Adrenal gland (tissue), 19 donors: ENCODE measurements at regions of chr4 and their contacts with region 1.

Region 1: DNA sequence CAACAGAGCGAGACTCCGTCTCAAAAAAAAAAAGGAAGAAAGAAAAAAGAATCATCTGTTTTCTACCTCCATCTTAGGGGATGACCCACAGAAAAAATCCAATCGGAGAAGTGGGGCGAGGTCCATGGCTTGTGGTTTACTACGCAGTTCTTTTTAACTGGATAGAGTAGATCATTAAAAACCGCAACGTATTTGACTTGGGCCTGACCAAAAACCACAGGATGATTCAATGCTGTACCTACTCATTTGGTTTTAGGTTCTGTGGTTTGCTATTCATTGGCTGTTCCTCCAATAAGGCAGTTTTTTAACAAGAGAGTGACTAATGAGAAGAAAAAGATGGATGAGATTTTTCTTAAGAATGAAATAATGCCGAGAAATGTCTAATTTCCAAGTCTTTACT is 83.7 kb downstream of the FREM3 start:
- DNase-seq: no peak
- H3K4me3 ChIP-seq: no peak overlapping the region
- H3K27ac ChIP-seq: no peak overlapping the region
- H3K4me1 ChIP-seq: no peaks in the 10 kb centered on the region
- H3K27me3 ChIP-seq: no peaks in the 10 kb centered on the region
- CTCF ChIP-seq: no peak
- POLR2A ChIP-seq: no peak

Region 2: GRCh38 chr4:143513306-143514168 is 103.2 kb before region 1 on chr4 and contains the start of gene SMARCA5:
- intact Hi-C with region 1: no loop called
- DNase-seq: peak; percentile 96 to 99 (median 98)
- H3K4me3 ChIP-seq: peak within 1 kb of the TSS; percentile 81 to 94 (median 82)
- H3K27ac ChIP-seq: peak within 1 kb of the TSS; percentile 97 to 100 (median 98)
- H3K4me1 ChIP-seq: peaks cover 20 to 35% of the 10 kb centered on the region in 2 donors
- H3K27me3 ChIP-seq: no peaks in the 10 kb centered on the region
- CTCF ChIP-seq: no peak
- POLR2A ChIP-seq: peak; percentile 85 to 89
- total RNA-seq, gene SMARCA5: 35.5 to 67.9 (median 61.5) TPM

Region 3: GRCh38 chr4:143679434-143679833 is 62.7 kb after region 1 on chr4:
- intact Hi-C with region 1: loop called in 1 of 2 experiments (anchors 5 kb)
- DNase-seq: no peak
- H3K4me3 ChIP-seq: no peak overlapping the region
- H3K27ac ChIP-seq: no peak overlapping the region
- H3K4me1 ChIP-seq: no peaks in the 10 kb centered on the region
- H3K27me3 ChIP-seq: no peaks in the 10 kb centered on the region
- CTCF ChIP-seq: no peak
- POLR2A ChIP-seq: no peak

Region 4: GRCh38 chr4:143773998-143774895 is 157.5 kb after region 1 on chr4:
- intact Hi-C with region 1: no loop called
- DNase-seq: peak; percentile 48 to 83 (median 71)
- H3K4me3 ChIP-seq: no peak overlapping the region
- H3K27ac ChIP-seq: no peak overlapping the region
- H3K4me1 ChIP-seq: no peaks in the 10 kb centered on the region
- H3K27me3 ChIP-seq: no peaks in the 10 kb centered on the region
- CTCF ChIP-seq: peak; percentile 63 to 80 (median 77)
- POLR2A ChIP-seq: no peak